ENCODE measurements at regions of chr2 and their contacts with region 1.

Region 1: DNA sequence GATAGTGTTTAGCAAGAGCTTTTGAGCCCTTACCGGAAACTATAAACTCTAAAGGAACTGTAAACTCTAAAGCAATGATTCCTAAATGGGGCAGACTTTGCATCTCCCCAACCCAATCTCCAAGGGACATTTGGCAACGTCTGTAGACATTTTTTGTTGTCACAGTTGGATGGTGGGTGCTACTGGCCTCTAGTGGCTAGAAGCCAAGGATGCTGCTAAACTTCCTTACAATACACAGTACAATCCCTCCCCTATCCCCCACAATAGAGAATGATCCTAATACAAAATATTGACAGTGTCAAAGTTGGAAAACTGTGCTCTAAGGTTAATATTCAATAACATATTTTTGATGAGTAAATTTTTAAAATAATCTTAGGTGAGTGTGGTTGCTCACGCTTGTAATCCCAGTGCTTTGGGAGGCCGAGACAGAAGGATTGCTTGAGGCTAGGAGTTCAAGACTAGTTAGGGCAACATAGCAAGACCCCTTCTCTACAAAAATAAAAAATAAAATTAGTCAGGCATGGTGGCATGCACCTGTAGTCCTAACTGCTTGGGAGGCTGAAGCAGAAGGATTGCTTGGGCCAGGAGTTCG is 66.7 kb downstream of the PTPN4 start:
- DNase-seq: no peak
- ATAC-seq: peak in 3 of 8 donors; percentile 57 to 59 (median 57)
- H3K4me3 ChIP-seq: no peak overlapping the region
- H3K27ac ChIP-seq: no peak overlapping the region
- H3K4me1 ChIP-seq: peaks cover 0 to 21% (median 7%) of the 10 kb centered on the region in 9 donors
- H3K27me3 ChIP-seq: no peaks in the 10 kb centered on the region
- CTCF ChIP-seq: peak in 8 of 9 donors; percentile 17 to 72 (median 58)

Region 2: DNA sequence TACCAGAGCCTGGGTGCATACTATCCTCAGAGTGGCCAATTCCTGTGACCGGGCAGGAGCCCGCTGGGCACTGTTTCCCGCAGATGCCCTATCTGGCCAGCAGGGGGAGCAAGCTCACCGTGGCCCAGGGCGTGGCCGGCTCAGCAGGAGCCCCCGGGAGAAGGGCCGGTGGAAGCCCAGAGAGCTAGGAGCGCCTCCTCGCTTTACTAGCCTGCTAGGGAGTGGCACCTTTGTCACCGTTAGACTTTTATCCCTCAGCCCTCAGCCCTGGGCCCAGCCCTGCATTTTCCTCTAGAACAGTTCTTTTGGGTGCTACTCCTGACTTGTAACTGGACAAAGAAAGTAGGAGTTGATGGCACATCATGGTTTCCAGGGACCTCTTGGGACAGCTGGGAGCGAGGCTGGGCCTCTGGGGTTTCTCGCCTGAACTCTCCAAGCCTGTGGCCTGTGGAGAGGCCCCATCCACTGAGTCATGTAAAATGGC is 123.5 kb before region 1 on chr2:
- intact Hi-C with region 1: loop called in 5 of 10 experiments (anchors 2 to 5 kb)
- DNase-seq: peak; percentile 59 to 63
- ATAC-seq: peak; percentile 79 to 91 (median 89)
- H3K4me3 ChIP-seq: no peak overlapping the region
- H3K27ac ChIP-seq: no peak overlapping the region
- H3K4me1 ChIP-seq: peaks cover 0 to 23% (median 5%) of the 10 kb centered on the region in 9 donors
- H3K27me3 ChIP-seq: no peaks in the 10 kb centered on the region
- CTCF ChIP-seq: peak; percentile 87 to 97 (median 92)

Region 3: GRCh38 chr2:119753041-119753929 is 73.2 kb before region 1 on chr2:
- intact Hi-C with region 1: loop called (anchors 1 to 5 kb)
- DNase-seq: no peak
- ATAC-seq: peak; percentile 36 to 80 (median 70)
- H3K4me3 ChIP-seq: no peak overlapping the region
- H3K27ac ChIP-seq: no peak overlapping the region
- H3K4me1 ChIP-seq: peaks cover 0 to 23% (median 0%) of the 10 kb centered on the region in 9 donors
- H3K27me3 ChIP-seq: no peaks in the 10 kb centered on the region
- CTCF ChIP-seq: peak; percentile 53 to 88 (median 73)

Region 4: DNA sequence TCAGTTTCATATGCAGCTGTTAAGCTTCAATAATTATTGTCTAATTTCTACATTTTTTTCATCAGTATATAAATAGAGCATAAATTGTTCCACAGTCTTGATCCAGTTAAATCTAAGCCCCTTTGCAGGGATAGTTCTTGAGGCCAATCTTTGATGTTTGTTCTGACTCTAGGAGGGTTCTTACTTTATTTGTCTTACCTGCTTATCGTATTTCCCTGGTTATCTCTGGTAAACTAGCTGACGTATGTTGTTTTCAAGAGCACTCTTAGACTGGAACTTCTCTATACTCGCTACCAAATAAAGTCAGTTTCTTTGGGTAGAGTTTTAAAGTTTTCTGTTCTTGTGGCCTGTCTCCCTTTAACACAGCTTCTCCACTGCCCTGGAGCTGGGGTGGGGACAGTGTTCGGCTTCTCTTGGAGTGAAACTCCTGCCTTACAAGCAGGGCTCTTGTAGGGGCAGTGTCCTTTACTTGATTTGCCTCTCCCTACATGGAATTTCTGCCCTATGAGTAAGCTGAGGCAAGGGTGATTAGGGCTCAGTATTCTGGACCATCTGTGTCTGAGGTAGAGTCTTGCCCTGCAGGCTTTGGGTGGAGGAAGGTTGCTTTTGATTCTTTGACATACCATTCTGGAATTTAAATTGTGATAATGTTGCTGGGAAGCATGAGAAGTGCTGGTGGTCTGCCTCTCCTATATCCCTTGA is 23.5 kb after region 1 on chr2:
- intact Hi-C with region 1: no loop called
- DNase-seq: no peak
- ATAC-seq: peak in 3 of 8 donors; percentile 39 to 49 (median 39)
- H3K4me3 ChIP-seq: no peak overlapping the region
- H3K27ac ChIP-seq: no peak overlapping the region
- H3K4me1 ChIP-seq: peaks cover 0 to 11% (median 4%) of the 10 kb centered on the region in 9 donors
- H3K27me3 ChIP-seq: no peaks in the 10 kb centered on the region
- CTCF ChIP-seq: no peak